Tibial artery (tissue), 4 donors: ENCODE measurements at regions of chr1 and their contacts with region 1.

Region 1: DNA sequence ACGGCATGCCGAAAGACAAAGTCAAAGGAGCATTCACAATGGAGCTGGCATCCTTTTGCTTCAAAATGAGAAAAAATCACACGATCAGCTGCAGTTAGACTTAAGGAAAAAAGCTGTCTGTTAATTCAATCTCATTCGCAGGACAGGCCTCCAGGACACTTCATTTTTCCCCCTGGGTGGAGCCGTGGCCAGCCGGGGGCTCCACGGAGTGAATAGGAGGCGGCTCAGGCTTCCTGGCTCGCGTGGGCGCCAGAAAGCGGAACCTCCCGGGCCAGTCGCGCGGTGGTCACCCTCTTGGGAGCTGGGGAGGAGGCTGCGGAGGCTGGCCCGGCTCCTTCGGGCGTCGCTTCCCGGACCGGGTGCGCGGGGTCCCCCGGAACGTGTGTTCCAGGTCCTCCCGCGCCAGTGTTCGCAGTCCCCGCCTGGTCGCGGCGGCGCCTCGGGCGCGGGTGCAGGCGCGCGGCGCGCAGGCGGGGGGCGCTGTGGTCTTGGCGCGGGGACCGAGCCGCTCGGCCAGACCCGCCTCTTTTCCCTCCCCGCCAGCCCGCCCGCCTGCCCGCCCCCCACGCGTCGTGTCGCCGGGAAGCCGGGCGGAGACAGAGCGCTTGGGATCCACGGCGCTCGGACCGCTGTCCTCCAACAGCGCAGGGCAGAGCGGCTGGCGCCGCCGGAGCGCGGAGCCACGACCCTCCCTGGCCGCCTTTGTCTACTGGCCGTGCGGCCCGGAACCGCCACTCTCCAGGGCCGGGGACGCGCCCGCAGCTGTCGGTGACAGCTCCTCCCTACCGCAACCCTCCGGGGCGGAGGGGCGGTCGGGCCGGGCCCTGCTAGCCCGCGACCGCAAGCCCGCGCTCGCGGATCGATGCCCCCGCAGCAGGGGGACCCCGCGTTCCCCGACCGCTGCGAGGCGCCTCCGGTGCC is at the start of gene RHOU:
- DNase-seq: peak; percentile 63 to 88
- H3K4me3 ChIP-seq: peak within 1 kb of the TSS; percentile 96 to 97
- H3K27ac ChIP-seq: peak within 1 kb of the TSS; percentile 89 to 95
- H3K4me1 ChIP-seq: peaks cover 0 to 34% (median 17%) of the 10 kb centered on the region in 4 donors
- H3K27me3 ChIP-seq: no peaks in the 10 kb centered on the region
- CTCF ChIP-seq: peak; percentile 83 to 93

Region 2: DNA sequence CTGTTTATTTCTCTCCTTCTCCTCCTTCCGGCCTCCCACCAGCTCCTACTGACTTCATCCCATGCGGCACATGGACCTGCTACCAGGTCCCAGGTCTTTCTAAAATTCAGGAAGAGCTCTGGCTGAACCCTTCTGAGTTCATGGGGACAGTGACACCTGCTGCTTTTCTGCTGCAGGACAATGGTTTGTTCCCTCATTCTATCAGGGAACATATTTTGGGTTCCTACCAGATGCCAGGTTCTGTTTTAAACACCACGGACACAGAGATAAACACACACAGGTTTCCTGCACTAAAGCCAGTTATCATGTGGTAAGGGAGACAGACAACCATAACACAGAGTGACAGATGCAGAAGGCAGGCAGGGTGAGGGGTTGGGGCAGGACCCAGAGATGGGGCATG is 421.7 kb after region 1 on chr1:
- intact Hi-C with region 1: loop called (anchors 5 kb)
- DNase-seq: peak; percentile 40 to 79
- H3K4me3 ChIP-seq: no peak overlapping the region
- H3K27ac ChIP-seq: no peak overlapping the region
- H3K4me1 ChIP-seq: peaks cover 0 to 14% (median 10%) of the 10 kb centered on the region in 4 donors
- H3K27me3 ChIP-seq: no peaks in the 10 kb centered on the region
- CTCF ChIP-seq: peak; percentile 77 to 83

Region 3: DNA sequence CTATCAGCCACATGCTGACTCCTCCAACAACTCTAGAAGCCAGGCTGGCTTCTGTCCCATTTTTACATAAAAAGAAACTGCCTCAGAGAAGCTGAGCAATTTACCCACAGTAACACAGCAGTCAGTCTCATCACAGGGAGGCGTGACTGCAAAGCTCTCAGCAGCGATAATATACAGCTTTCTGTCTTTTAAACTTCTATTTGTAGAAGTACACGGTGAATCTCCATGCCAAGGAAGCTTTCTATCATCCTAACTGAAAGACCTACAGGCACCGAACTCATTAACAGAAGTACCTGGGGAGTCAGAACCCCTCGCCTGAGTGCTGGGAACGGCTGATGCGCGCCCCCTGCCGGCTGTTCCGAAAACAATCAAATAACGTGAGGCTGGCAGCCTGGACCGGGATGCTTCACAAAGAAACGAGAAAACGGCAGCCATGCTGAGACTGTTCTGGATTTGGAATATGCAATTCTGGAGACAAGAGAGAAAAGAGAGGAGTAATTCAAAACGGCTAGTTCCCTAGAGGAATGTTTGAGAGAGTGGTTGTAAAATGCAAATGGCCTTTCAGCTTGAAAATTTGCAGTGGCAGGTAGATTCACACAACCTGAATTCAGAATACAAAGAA is 492.3 kb after region 1 on chr1:
- intact Hi-C with region 1: loop called (anchors 5 kb)
- DNase-seq: peak; percentile 77 to 85
- H3K4me3 ChIP-seq: no peak overlapping the region
- H3K27ac ChIP-seq: no peak overlapping the region
- H3K4me1 ChIP-seq: peaks cover 0 to 42% (median 22%) of the 10 kb centered on the region in 4 donors
- H3K27me3 ChIP-seq: no peaks in the 10 kb centered on the region
- CTCF ChIP-seq: peak; percentile 78 to 86